ENCODE measurements at regions of chr5 and their contacts with region 1.

Region 1: GRCh38 chr5:143002459-143003328 is 232.5 kb downstream of the ARHGAP26 start:
- DNase-seq: peak; percentile 97
- H3K4me3 ChIP-seq: peak overlapping the region in 1 of 3 experiments; percentile 14
- H3K27ac ChIP-seq: peak overlapping the region; percentile 90
- H3K4me1 ChIP-seq: peaks cover 22% of the 10 kb centered on the region
- H3K27me3 ChIP-seq: no peaks in the 10 kb centered on the region
- CTCF ChIP-seq: peak; percentile 30 to 34
- POLR2A ChIP-seq: no peak

Region 2: DNA sequence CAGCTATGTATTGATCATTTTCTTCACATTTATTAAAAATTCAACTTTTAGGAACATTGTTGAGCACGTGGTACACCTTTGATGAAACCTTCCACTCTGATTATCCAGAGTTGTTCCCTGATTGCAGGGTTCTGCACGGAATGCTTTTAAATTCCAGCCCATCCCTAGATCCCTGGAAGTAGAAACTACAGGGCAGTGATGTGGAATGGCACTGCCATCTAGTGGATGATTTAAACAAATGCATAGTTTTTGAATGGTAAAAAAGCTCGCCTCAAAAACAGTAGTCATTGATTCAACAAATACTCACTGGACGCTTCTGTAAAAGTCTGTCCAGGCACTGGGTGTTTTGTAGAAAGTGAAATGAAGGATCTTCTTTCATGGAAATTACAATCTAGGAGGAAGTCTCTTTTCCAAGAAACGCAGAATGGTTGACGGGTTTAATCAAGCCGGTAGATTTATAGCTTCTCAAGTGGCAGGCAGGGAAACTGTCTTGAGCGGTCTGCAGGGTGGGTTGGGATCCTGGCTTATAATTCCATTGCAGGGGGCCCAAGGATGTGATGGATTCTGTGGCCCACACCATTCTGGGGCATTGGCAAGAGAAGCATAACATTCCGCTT is 114.1 kb before region 1 on chr5:
- CTCF ChIA-PET with region 1: interaction called, 11 read pairs
- POLR2A ChIA-PET with region 1: no interaction called
- dilution Hi-C with region 1: no loop called
- intact Hi-C with region 1: no loop called
- DNase-seq: peak; percentile 55
- H3K4me3 ChIP-seq: no peak overlapping the region
- H3K27ac ChIP-seq: no peak overlapping the region
- H3K4me1 ChIP-seq: peaks cover 3% of the 10 kb centered on the region
- H3K27me3 ChIP-seq: no peaks in the 10 kb centered on the region
- CTCF ChIP-seq: peak; percentile 50 to 60
- POLR2A ChIP-seq: no peak

Region 3: GRCh38 chr5:142959683-142960657 is 42.7 kb before region 1 on chr5:
- CTCF ChIA-PET with region 1: interaction called, 6 read pairs
- POLR2A ChIA-PET with region 1: no interaction called
- dilution Hi-C with region 1: no loop called
- intact Hi-C with region 1: loop called (anchors 1 kb)
- DNase-seq: peak; percentile 36
- H3K4me3 ChIP-seq: no peak overlapping the region
- H3K27ac ChIP-seq: no peak overlapping the region
- H3K4me1 ChIP-seq: peaks cover 2% of the 10 kb centered on the region
- H3K27me3 ChIP-seq: no peaks in the 10 kb centered on the region
- CTCF ChIP-seq: no peak
- POLR2A ChIP-seq: no peak

Region 4: DNA sequence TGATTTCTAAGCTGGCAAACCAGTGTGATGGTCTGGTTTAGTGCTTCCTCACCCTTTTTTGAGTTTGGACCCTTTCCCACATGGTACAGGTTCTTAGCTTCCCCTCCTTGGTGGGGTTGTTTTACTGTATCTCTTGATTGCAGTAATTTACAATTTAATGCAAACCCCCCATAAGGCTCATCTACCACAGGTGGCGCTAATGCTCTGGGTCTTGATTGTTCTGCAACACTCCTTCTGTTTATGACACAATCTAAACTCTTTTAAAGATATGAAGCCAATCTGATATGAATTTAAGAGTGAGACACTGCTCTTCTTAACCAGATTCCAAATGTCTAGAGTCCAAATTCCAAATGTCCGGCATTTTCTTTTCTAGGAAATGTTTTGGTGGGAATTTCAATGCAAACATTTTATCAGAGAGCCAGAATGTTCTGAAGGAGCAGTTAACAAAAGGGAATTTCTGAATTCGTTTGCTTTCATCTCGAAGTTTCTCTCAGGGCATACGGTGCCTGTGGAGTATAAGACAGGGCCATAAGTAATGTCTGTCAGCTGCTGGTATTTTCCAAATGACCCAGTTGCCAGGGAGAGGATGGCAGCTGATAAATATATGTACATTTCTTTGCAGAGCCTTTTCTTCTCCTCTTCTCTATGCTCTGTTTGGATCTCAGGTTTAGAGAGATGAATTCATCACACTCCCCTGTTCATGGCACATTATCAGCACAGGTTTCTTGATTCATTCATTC is 14.3 kb after region 1 on chr5:
- CTCF ChIA-PET with region 1: interaction called, 11 read pairs
- POLR2A ChIA-PET with region 1: no interaction called
- dilution Hi-C with region 1: no loop called
- intact Hi-C with region 1: no loop called
- DNase-seq: peak; percentile 67
- H3K4me3 ChIP-seq: no peak overlapping the region
- H3K27ac ChIP-seq: no peak overlapping the region
- H3K4me1 ChIP-seq: no peaks in the 10 kb centered on the region
- H3K27me3 ChIP-seq: no peaks in the 10 kb centered on the region
- CTCF ChIP-seq: peak; percentile 62 to 63
- POLR2A ChIP-seq: no peak

Region 5: GRCh38 chr5:143124593-143124992 is 121.9 kb after region 1 on chr5:
- CTCF ChIA-PET with region 1: interaction called, 19 read pairs
- POLR2A ChIA-PET with region 1: no interaction called
- dilution Hi-C with region 1: no loop called
- intact Hi-C with region 1: no loop called
- DNase-seq: no peak
- H3K4me3 ChIP-seq: no peak overlapping the region
- H3K27ac ChIP-seq: no peak overlapping the region
- H3K4me1 ChIP-seq: peaks cover 16% of the 10 kb centered on the region
- H3K27me3 ChIP-seq: peaks cover 3 to 7% of the 10 kb centered on the region in 2 experiments
- CTCF ChIP-seq: no peak
- POLR2A ChIP-seq: no peak

Region 6: GRCh38 chr5:143582869-143583268 is 580.2 kb after region 1 on chr5:
- CTCF ChIA-PET with region 1: no interaction called
- POLR2A ChIA-PET with region 1: no interaction called
- dilution Hi-C with region 1: no loop called
- intact Hi-C with region 1: loop called (anchors 10 kb)
- DNase-seq: no peak
- H3K4me3 ChIP-seq: no peak overlapping the region
- H3K27ac ChIP-seq: no peak overlapping the region
- H3K4me1 ChIP-seq: peaks cover 18% of the 10 kb centered on the region
- H3K27me3 ChIP-seq: no peaks in the 10 kb centered on the region
- CTCF ChIP-seq: no peak
- POLR2A ChIP-seq: no peak

Region 7: GRCh38 chr5:144142139-144142823 is 1139.6 kb after region 1 on chr5:
- CTCF ChIA-PET with region 1: interaction called, 8 read pairs
- POLR2A ChIA-PET with region 1: no interaction called
- dilution Hi-C with region 1: no loop called
- intact Hi-C with region 1: loop called (anchors 1 kb)
- DNase-seq: peak; percentile 68
- H3K4me3 ChIP-seq: no peak overlapping the region
- H3K27ac ChIP-seq: no peak overlapping the region
- H3K4me1 ChIP-seq: peaks cover 29% of the 10 kb centered on the region
- H3K27me3 ChIP-seq: no peaks in the 10 kb centered on the region
- CTCF ChIP-seq: peak; percentile 55 to 71
- POLR2A ChIP-seq: no peak

Measured in endothelial cell of umbilical vein (primary cell).